Caco-2 (cell line): ENCODE measurements at regions of chr1 and their contacts with region 1.

Region 1: DNA sequence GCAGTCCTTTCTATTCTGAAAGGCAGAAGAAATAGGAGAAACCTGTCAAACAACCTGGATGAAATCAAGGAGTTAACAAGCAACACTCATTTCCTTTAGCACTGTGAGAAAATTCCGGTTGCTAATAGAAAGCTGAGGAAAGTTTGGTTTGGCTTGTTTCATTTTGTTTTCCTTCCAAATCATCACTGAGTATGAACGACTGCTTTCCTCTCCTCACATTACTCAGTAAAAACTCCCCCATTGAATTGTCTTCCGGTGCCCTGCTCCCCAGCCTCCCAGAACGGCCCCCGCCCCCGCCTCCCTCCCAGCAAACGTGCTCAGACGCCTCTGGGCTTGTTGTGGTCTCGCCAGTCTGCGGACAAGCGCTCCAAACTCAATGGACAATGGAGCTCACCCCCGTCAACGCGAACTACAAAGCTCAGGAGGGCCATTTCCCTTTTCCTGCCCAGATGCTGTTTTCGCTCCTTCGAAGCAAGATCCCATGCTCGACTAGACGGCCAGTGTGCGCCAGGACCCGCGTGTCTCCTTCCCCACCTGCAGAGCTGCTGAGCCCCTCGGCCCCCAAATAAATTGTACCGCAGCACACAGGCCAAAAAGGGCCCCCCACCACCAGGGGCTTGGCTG is 747 bp downstream of the STX6 start:
- DNase-seq: peak; percentile 58 to 71
- H3K4me3 ChIP-seq: peak overlapping the region; percentile 81
- H3K4me3 Mint-ChIP-seq: peak overlapping the region; percentile 90
- H3K27ac Mint-ChIP-seq: peak overlapping the region; percentile 96
- H3K4me1 ChIP-seq: 0 out of 2 replicates have a peak, but pooled peaks cover 5% of the 10 kb centered on the region
- H3K4me1 Mint-ChIP-seq: peaks cover 8% of the 10 kb centered on the region
- H3K27me3 ChIP-seq: no peaks in the 10 kb centered on the region
- H3K27me3 Mint-ChIP-seq: peaks cover 3% of the 10 kb centered on the region
- CTCF ChIP-seq: no peak

Region 2: GRCh38 chr1:180502360-180503273 is 519.3 kb before region 1 on chr1 and contains the start of gene ACBD6:
- CTCF ChIA-PET with region 1: no interaction called
- POLR2A ChIA-PET with region 1: interaction called, 7 read pairs
- intact Hi-C with region 1: loop called (anchors 5 kb)
- DNase-seq: peak; percentile 86 to 91
- H3K4me3 ChIP-seq: peak within 1 kb of the TSS; percentile 67
- H3K4me3 Mint-ChIP-seq: peak within 1 kb of the TSS; percentile 96
- H3K27ac Mint-ChIP-seq: peak within 1 kb of the TSS; percentile 96
- H3K4me1 ChIP-seq: peaks cover 7% of the 10 kb centered on the region; the same call in 1 of the 2 replicates
- H3K4me1 Mint-ChIP-seq: no peaks in the 10 kb centered on the region
- H3K27me3 ChIP-seq: no peaks in the 10 kb centered on the region
- H3K27me3 Mint-ChIP-seq: no peaks in the 10 kb centered on the region
- CTCF ChIP-seq: peak in 1 of 2 experiments; percentile 17
- total RNA-seq, gene ACBD6: 74.7 and 75.6 TPM in 2 replicates

Region 3: GRCh38 chr1:180975551-180975950 is 46.4 kb before region 1 on chr1:
- CTCF ChIA-PET with region 1: no interaction called
- POLR2A ChIA-PET with region 1: no interaction called
- intact Hi-C with region 1: no loop called
- DNase-seq: no peak
- H3K4me3 ChIP-seq: no peak overlapping the region
- H3K4me3 Mint-ChIP-seq: no peak overlapping the region
- H3K27ac Mint-ChIP-seq: no peak overlapping the region
- H3K4me1 ChIP-seq: peaks cover 4% of the 10 kb centered on the region; the same call in 1 of the 2 replicates
- H3K4me1 Mint-ChIP-seq: peaks cover 7% of the 10 kb centered on the region
- H3K27me3 ChIP-seq: no peaks in the 10 kb centered on the region
- H3K27me3 Mint-ChIP-seq: no peaks in the 10 kb centered on the region
- CTCF ChIP-seq: no peak

Region 4: GRCh38 chr1:181010789-181011188 is 11.1 kb before region 1 on chr1:
- CTCF ChIA-PET with region 1: no interaction called
- POLR2A ChIA-PET with region 1: no interaction called
- intact Hi-C with region 1: loop called (anchors 1 kb)
- DNase-seq: no peak
- H3K4me3 ChIP-seq: no peak overlapping the region
- H3K4me3 Mint-ChIP-seq: no peak overlapping the region
- H3K27ac Mint-ChIP-seq: peak overlapping the region; percentile 50
- H3K4me1 ChIP-seq: peaks cover 15% of the 10 kb centered on the region; the same call in 1 of the 2 replicates
- H3K4me1 Mint-ChIP-seq: peaks cover 17% of the 10 kb centered on the region
- H3K27me3 ChIP-seq: no peaks in the 10 kb centered on the region
- H3K27me3 Mint-ChIP-seq: no peaks in the 10 kb centered on the region
- CTCF ChIP-seq: no peak

Region 5: DNA sequence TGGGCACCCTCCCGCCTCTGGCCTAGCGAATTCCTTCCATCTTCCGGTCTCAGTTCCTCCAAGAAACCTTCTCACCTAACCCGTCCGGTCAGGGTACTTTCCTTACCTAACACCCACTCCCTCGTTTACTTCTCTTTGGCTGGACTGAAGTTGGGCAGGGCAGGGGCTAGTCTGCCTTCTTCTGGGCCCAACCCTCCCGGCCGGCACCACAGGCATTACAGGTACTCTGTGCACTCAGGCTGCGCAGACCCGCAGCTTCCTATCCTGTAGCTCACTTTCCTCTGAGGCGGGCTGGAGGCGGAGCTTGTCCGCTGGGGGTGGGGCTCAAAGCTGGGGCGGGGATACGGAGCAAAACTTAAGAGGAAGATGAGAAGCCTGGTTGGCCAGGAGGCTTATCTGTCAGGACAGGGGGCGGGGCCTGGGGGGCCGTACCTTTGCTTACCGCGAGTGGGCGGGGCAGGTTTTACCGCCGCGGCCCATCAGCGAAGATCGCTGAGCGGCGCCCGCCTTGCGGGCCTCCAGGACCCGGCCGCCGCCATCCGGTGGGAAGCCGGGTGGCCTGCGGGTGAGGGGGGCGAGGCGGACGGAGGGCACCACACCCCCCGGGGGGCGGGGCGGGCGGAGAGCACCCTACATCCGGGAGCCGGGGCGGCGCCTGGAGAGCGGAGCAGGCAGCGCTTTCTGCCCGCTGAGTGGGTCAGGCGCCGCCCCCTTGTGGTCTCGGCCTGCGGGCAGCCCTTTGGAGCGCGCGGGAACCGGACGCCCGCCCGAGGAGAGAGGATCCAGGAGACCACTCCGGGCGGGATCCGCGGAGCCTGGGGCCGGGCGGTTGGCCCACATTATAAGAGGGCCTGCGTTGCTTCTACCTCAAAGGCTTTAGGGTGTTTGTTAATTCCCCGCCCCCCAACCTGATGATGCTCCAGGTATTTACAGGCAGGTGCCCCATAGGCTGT is 1007.7 kb after region 1 on chr1:
- CTCF ChIA-PET with region 1: no interaction called
- POLR2A ChIA-PET with region 1: interaction called, 10 read pairs
- intact Hi-C with region 1: no loop called
- DNase-seq: peak; percentile 97
- H3K4me3 ChIP-seq: peak overlapping the region; percentile 65
- H3K4me3 Mint-ChIP-seq: peak overlapping the region; percentile 84
- H3K27ac Mint-ChIP-seq: peak overlapping the region; percentile 81
- H3K4me1 ChIP-seq: peaks cover 11% of the 10 kb centered on the region
- H3K4me1 Mint-ChIP-seq: peaks cover 10% of the 10 kb centered on the region
- H3K27me3 ChIP-seq: no peaks in the 10 kb centered on the region
- H3K27me3 Mint-ChIP-seq: no peaks in the 10 kb centered on the region
- CTCF ChIP-seq: peak; percentile 42 to 71